Prostate gland (tissue), 2 donors: ENCODE measurements at regions of chr3 and their contacts with region 1.

Region 1: GRCh38 chr3:143951351-143951971 is 20.2 kb upstream of the DIPK2A start:
- DNase-seq: peak; percentile 14
- H3K4me3 ChIP-seq: no peak overlapping the region
- H3K27ac ChIP-seq: no peak overlapping the region
- H3K4me1 ChIP-seq: no peaks in the 10 kb centered on the region
- H3K27me3 ChIP-seq: no peaks in the 10 kb centered on the region
- CTCF ChIP-seq: peak; percentile 34 to 77 (median 67)
- POLR2A ChIP-seq: no peak

Region 2: DNA sequence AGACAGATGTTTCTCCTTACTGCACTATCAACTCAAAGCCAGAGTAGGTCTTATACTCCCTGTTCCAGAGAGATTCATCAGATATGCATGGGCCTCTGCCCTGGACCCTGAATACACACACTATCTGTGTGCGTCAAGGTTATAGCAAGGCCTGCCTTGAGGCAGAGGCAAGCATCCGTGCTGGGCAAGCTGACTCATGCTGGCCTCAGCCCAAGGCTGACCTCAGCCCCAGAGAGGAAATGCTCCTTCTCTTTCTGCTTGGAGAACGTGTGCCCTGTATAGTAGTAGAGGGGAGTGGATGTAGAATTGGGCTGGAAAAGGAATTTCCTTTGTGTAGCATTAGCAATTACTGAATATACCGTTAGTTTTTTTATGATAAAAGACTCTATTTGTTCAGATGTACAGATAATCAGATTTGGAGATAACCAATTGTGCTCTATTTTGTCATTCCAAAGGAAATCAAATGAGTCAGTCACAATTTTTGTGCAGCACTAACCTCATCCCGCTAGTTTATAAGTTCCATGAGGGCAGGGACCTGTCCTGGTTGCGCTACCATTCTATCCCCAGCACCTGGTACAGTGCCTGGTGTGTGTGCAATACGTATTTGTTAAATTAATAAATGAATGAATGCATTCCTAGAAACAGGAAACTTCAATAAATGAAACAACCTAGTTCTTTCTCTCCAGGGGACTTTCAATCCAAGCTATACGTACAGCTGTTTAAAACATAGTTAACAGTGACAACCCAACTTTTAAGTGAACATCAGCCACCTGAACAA is 974.7 kb before region 1 on chr3:
- intact Hi-C with region 1: no loop called
- DNase-seq: no peak
- H3K4me3 ChIP-seq: no peak overlapping the region
- H3K27ac ChIP-seq: no peak overlapping the region
- H3K4me1 ChIP-seq: no peaks in the 10 kb centered on the region
- H3K27me3 ChIP-seq: no peaks in the 10 kb centered on the region
- CTCF ChIP-seq: no peak
- POLR2A ChIP-seq: no peak

Region 3: DNA sequence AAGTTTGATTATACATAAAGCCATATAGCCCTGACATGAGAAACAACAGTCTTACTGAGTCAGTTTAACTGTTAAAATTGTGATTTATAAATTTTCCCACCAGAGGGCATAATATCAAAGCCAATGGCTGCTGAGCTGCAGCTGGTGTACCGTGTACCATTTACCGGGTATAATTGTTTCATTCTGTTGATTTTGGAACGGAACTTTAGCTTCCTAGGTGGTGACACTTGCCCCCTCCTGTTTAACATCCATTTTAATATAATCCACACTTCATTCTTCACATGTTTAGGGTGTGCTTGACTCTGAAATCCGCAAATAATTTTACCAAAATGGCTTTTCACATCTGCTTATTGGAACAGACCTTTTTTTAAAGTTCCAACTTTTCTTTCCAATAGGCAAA is 176.0 kb before region 1 on chr3:
- intact Hi-C with region 1: loop called (anchors 5 kb)
- DNase-seq: peak; percentile 17
- H3K4me3 ChIP-seq: no peak overlapping the region
- H3K27ac ChIP-seq: no peak overlapping the region
- H3K4me1 ChIP-seq: no peaks in the 10 kb centered on the region
- H3K27me3 ChIP-seq: no peaks in the 10 kb centered on the region
- CTCF ChIP-seq: peak in 3 of 4 experiments; percentile 60 to 71 (median 66)
- POLR2A ChIP-seq: no peak

Region 4: GRCh38 chr3:143875546-143875945 is 75.9 kb before region 1 on chr3:
- intact Hi-C with region 1: no loop called
- DNase-seq: no peak
- H3K4me3 ChIP-seq: no peak overlapping the region
- H3K27ac ChIP-seq: no peak overlapping the region
- H3K4me1 ChIP-seq: no peaks in the 10 kb centered on the region
- H3K27me3 ChIP-seq: no peaks in the 10 kb centered on the region
- CTCF ChIP-seq: no peak
- POLR2A ChIP-seq: no peak

Region 5: GRCh38 chr3:143895805-143896204 is 55.7 kb before region 1 on chr3:
- intact Hi-C with region 1: loop called (anchors 10 kb)
- DNase-seq: no peak
- H3K4me3 ChIP-seq: no peak overlapping the region
- H3K27ac ChIP-seq: no peak overlapping the region
- H3K4me1 ChIP-seq: no peaks in the 10 kb centered on the region
- H3K27me3 ChIP-seq: no peaks in the 10 kb centered on the region
- CTCF ChIP-seq: no peak
- POLR2A ChIP-seq: no peak